Activated CD4-positive, alpha-beta T cell treated with anti-CD3 and anti-CD28 coated beads for 36 hours (primary cell): ENCODE measurements at regions of chr6 and their contacts with region 1.

Region 1: DNA sequence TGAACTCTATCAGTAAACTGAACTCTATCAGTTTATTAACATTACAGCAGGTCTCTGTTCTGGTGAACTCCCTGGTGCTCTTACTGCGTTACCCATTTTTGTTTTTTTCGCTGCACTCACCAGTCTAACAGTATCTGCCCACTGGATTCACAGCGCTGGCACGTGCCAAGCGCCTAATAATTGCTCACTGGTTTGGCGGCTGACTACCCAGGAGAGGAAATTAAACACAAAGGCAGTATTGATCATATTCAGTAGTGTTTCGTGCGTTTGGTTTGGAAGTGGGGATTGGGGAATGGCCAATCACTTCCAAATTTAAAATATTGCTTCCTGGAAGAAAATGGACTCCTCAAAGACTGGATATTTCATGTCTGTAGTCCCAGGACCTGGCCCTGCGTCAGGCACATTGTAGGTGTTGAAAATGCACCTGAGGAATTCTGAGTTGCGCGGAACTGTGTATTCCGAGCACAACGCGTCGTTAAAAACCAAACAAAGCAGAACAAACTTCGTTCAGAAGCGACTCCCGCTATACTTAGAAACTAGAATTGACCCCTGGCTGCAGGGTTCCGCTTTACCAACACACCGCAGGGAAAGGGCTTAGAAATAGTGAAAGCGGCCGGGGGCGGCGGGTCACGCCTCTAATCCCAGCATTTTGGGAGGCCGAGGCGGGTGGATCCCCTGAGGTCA is 1.1 kb upstream of the RPS12 start:
- DNase-seq: peak; percentile 64
- ATAC-seq: peak; percentile 23
- H3K4me3 Mint-ChIP-seq: peak overlapping the region; percentile 89
- H3K27ac Mint-ChIP-seq: peak overlapping the region; percentile 99
- H3K4me1 Mint-ChIP-seq: peaks cover 30% of the 10 kb centered on the region
- H3K27me3 Mint-ChIP-seq: no peaks in the 10 kb centered on the region

Region 2: DNA sequence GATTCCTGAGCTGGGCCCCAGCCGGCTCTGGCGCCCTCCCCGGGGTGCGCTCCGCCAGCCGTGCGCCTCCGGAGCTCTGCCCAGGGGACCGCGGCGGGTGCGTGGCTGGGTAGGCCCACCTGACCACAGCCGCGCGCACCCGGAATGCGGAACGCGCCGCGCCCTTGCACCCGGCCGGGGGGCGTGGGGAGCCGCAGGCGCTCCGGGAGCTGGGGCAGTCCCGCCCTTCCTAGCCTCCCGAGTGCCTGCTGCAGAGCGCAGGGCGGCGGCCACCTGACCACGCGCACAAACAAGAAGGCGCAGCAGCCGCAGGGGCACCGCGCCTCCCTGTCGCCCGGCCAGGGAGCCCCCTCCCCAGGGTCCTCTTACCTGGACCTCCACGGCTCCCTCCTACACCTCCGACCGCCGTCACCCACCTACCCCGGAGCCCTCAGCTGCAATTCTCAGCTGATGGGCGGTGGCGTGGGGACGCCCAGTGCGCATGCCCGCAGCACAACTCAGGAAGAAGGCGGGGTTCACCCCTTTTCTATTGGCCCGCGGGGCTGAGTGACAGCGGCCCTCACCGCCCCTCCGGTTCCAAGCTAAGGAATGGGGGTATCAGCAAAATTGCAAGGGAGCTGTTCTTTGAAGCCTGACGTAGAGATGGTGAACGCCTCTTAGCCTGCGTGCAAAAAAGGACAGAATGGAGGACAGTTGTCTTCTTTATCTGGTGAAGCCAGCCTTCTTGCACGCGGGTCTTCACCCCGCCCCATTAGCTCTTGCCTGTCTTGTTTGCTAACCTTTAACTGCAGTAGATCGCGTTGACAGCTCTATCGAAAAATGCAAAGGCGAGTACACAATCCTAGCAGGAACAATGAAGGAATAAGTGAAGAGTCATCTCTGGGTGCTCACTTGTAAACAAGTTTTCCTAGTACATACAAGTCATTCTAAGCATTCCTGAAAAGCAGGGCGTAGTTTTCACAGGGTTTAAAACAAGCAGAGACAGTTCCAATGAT is 300.4 kb before region 1 on chr6 and contains the start of gene STX7:
- CTCF ChIA-PET with region 1: no interaction called
- POLR2A ChIA-PET with region 1: interaction called, 8 read pairs
- intact Hi-C with region 1: loop called (anchors 1 to 5 kb)
- DNase-seq: peak; percentile 90
- ATAC-seq: peak; percentile 97
- H3K4me3 Mint-ChIP-seq: peak within 1 kb of the TSS; percentile 88
- H3K27ac Mint-ChIP-seq: peak within 1 kb of the TSS; percentile 85
- H3K4me1 Mint-ChIP-seq: peaks cover 30% of the 10 kb centered on the region
- H3K27me3 Mint-ChIP-seq: no peaks in the 10 kb centered on the region
- total RNA-seq, gene STX7: 13.3 to 20.3 TPM

Region 3: GRCh38 chr6:132669690-132670291 is 143.5 kb before region 1 on chr6:
- CTCF ChIA-PET with region 1: interaction called, 5 read pairs
- POLR2A ChIA-PET with region 1: no interaction called
- intact Hi-C with region 1: loop called in 1 of 2 experiments (anchors 5 kb)
- DNase-seq: no peak
- ATAC-seq: peak; percentile 64
- H3K4me3 Mint-ChIP-seq: no peak overlapping the region
- H3K27ac Mint-ChIP-seq: no peak overlapping the region
- H3K4me1 Mint-ChIP-seq: peaks cover 3% of the 10 kb centered on the region
- H3K27me3 Mint-ChIP-seq: peaks cover 3% of the 10 kb centered on the region

Region 4: GRCh38 chr6:132683543-132683942 is 129.8 kb before region 1 on chr6:
- CTCF ChIA-PET with region 1: no interaction called
- POLR2A ChIA-PET with region 1: no interaction called
- intact Hi-C with region 1: no loop called
- DNase-seq: no peak
- ATAC-seq: no peak
- H3K4me3 Mint-ChIP-seq: no peak overlapping the region
- H3K27ac Mint-ChIP-seq: no peak overlapping the region
- H3K4me1 Mint-ChIP-seq: peaks cover 2% of the 10 kb centered on the region
- H3K27me3 Mint-ChIP-seq: peaks cover 15% of the 10 kb centered on the region

Region 5: DNA sequence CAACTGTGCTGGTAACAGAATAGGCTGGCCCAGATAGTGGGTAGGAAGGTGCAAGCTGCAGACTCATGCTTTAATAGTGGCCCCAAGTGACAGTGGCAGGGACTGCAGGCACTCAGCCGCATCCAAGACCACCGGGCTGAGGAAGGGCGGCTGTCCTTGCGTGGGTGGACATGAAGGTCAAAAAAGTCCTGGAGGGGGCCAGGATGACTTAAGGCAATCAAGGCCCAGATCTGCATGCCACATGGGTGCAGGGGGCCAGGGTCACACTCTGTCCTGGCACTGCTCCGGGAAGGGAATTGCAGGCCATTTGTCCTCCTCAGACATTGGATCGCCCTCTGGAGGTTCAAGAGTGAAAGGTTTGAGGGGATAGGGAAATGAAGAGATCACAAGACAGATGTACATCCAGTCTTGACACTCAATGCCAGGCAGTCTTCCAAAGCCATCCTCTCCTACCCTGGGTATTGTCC is 45.2 kb before region 1 on chr6:
- CTCF ChIA-PET with region 1: interaction called, 5 read pairs
- POLR2A ChIA-PET with region 1: interaction called, 8 read pairs
- intact Hi-C with region 1: loop called in 1 of 2 experiments (anchors 1 kb)
- DNase-seq: peak; percentile 54
- ATAC-seq: peak; percentile 67
- H3K4me3 Mint-ChIP-seq: no peak overlapping the region
- H3K27ac Mint-ChIP-seq: no peak overlapping the region
- H3K4me1 Mint-ChIP-seq: peaks cover 20% of the 10 kb centered on the region
- H3K27me3 Mint-ChIP-seq: no peaks in the 10 kb centered on the region

Region 6: GRCh38 chr6:133952815-133953633 is 1139.7 kb after region 1 on chr6 and contains the start of gene TBPL1:
- CTCF ChIA-PET with region 1: no interaction called
- POLR2A ChIA-PET with region 1: no interaction called
- intact Hi-C with region 1: loop called (anchors 1 to 10 kb)
- DNase-seq: peak; percentile 92
- ATAC-seq: peak; percentile 90
- H3K4me3 Mint-ChIP-seq: peak within 1 kb of the TSS; percentile 98
- H3K27ac Mint-ChIP-seq: peak within 1 kb of the TSS; percentile 93
- H3K4me1 Mint-ChIP-seq: peaks cover 38% of the 10 kb centered on the region
- H3K27me3 Mint-ChIP-seq: no peaks in the 10 kb centered on the region
- total RNA-seq, gene TBPL1: 32.2 to 33.9 TPM